Dendritic cell treated with granulocyte-macrophage colony-stimulating factor and Interleukin-4, amounts not matched to agents 40 ng/mL and 50 ng/mL, for 4 days (primary cell): ENCODE measurements at regions of chr3 and their contacts with region 1.

Region 1: GRCh38 chr3:56988458-56989168 is 71.9 kb upstream of the SPATA12 start:
- H3K4me3 Mint-ChIP-seq: no peak overlapping the region
- H3K27ac Mint-ChIP-seq: no peak overlapping the region
- H3K4me1 Mint-ChIP-seq: peaks cover 20% of the 10 kb centered on the region
- H3K27me3 Mint-ChIP-seq: peaks cover 25% of the 10 kb centered on the region

Region 2: GRCh38 chr3:56682462-56683121 is 306.0 kb before region 1 on chr3:
- intact Hi-C with region 1: no loop called
- H3K4me3 Mint-ChIP-seq: peak overlapping the region; percentile 95
- H3K27ac Mint-ChIP-seq: peak overlapping the region; percentile 93
- H3K4me1 Mint-ChIP-seq: peaks cover 13% of the 10 kb centered on the region
- H3K27me3 Mint-ChIP-seq: no peaks in the 10 kb centered on the region

Region 3: DNA sequence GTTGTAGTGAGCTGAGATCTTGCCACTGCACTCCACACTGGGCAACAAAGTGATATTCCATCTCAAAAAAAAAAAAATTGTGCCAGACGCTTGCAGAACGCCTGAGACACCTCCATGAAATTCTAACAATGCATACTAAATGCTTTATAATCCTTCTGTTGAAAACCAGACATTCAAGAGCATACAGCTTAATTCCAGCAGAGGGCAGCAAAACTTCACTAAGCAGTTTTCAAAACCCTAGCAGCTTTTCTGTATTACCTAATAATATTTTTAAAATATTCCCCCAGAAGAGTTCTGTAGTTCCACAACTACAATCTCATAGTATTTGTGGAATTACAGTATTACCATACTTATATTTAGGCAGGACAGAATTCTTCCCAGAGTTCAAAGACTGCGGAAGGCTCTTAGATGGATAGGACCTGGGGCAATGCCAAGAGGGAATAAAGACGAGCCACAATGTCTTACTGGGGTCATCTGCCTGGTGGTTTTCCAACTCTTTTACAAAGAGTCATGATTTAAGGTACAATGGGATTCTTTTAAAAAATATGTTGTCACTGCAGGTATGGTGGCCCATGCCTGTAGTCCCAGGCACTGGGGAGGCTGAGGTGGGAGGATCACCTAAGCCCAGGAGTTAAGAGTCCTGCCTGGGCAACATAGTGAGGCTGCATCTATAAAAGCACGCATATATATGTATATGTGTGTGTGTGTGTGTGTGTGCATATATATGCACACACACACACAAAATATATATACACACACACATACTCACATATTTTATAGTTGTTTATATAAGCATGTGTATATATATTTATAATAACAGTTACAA is 285.9 kb before region 1 on chr3:
- intact Hi-C with region 1: loop called (anchors 1 kb)
- H3K4me3 Mint-ChIP-seq: no peak overlapping the region
- H3K27ac Mint-ChIP-seq: no peak overlapping the region
- H3K4me1 Mint-ChIP-seq: peaks cover 10% of the 10 kb centered on the region
- H3K27me3 Mint-ChIP-seq: no peaks in the 10 kb centered on the region

Region 4: DNA sequence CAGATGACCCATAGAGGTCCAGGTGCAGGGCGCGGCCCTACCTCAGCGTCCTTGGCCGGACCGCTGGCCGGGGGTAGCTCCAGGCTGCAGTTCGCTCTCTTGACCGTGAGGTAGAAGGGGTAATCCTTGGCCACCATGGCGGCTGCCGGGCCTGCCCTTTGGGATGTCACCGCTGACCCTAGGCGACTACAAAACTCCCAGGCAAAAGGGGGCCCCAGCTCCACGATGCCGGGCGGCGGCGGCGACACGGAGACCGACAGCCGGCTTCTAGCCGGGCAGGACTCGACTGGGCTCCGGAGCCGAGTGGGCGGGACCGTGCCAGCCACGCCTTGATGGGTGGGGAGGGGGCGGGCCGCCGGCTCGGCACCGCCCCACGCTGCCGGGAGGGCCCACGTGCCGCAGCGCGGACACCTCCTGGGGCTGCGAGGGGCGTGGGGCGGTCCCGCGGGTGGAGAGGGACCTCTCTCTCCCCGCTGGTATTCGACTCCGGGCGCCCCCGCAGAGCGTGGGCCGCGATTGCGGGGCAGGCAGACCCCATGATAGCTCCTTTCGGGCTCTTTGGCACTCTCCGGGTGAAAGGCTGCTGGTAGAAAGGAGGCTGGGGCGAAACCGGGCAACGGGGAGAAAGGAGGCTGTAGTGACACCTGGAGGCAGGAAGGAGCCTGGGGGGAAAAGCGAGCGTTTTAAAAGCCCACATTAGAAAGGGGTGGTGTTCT is 186.8 kb before region 1 on chr3 and contains the start of gene ARHGEF3:
- intact Hi-C with region 1: loop called (anchors 2 kb)
- H3K4me3 Mint-ChIP-seq: peak within 1 kb of the TSS; percentile 94
- H3K27ac Mint-ChIP-seq: peak within 1 kb of the TSS; percentile 68
- H3K4me1 Mint-ChIP-seq: peaks cover 22% of the 10 kb centered on the region
- H3K27me3 Mint-ChIP-seq: peaks cover 2% of the 10 kb centered on the region

Region 5: GRCh38 chr3:56855856-56856512 is 132.6 kb before region 1 on chr3:
- intact Hi-C with region 1: loop called (anchors 10 kb)
- H3K4me3 Mint-ChIP-seq: peak overlapping the region; percentile 74
- H3K27ac Mint-ChIP-seq: peak overlapping the region; percentile 9
- H3K4me1 Mint-ChIP-seq: peaks cover 7% of the 10 kb centered on the region
- H3K27me3 Mint-ChIP-seq: peaks cover 11% of the 10 kb centered on the region

Region 6: GRCh38 chr3:56923521-56924224 is 64.9 kb before region 1 on chr3:
- intact Hi-C with region 1: loop called (anchors 10 kb)
- H3K4me3 Mint-ChIP-seq: no peak overlapping the region
- H3K27ac Mint-ChIP-seq: no peak overlapping the region
- H3K4me1 Mint-ChIP-seq: peaks cover 38% of the 10 kb centered on the region
- H3K27me3 Mint-ChIP-seq: no peaks in the 10 kb centered on the region